ENCODE measurements at regions of chr2 and their contacts with region 1.

Region 1: GRCh38 chr2:96509114-96509846 is 4.1 kb upstream of the NEURL3 start:
- DNase-seq: peak in 3 of 5 donors; percentile 21 to 45 (median 26)
- H3K4me3 ChIP-seq: no peak overlapping the region
- H3K4me3 Mint-ChIP-seq: peak overlapping the region in 4 of 8 donors; percentile 7 to 46 (median 20)
- H3K27ac ChIP-seq: no peak overlapping the region
- H3K27ac Mint-ChIP-seq: peak overlapping the region in 2 of 7 donors; percentile 9 to 66
- H3K4me1 ChIP-seq: peaks cover 10% of the 10 kb centered on the region
- H3K4me1 Mint-ChIP-seq: peaks cover 4 to 23% (median 13%) of the 10 kb centered on the region in 4 donors
- H3K27me3 ChIP-seq: no peaks in the 10 kb centered on the region
- H3K27me3 Mint-ChIP-seq: peaks cover 1 to 12% of the 10 kb centered on the region in 2 donors

Region 2: DNA sequence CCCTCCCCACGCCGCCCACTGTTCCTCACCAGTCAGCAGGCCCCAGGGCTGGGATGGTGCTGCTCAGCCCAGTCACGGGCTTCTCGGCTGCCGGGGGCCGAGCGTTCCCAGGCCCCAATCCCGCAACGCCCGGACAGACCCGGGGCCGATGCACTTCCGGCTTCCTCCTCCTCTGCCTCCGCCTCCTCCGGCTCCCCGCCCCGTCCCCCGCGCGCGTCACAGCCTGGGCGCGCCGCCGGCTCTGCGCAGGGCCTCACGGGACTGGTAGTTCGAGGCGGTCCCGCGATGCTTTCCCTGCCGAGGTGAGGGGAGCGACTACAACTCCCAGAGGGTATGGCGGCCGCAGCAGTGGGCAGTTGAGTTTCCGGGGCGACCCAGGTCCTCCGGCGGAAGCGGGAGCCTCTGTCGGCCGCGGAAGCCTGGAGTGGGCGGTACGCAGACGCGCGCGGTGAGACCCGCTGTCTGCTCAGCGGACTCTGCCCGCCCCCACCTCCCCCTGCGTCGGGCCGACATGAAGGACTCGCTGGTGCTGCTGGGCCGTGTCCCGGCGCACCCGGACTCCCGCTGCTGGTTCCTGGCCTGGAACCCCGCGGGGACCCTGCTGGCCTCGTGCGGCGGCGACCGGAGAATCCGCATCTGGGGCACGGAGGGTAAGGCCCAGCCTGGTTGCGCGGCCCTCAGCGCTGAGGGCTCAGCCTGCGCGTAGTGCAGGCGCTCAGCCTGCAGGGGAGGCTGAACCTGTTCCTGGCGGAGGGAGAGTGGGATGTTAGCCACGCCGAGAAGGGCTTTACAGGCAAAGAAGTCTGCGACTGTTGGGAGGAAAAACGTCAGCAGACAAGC is 243.2 kb before region 1 on chr2 and contains the starts of genes CIAO1 and TMEM127:
- CTCF ChIA-PET with region 1: interaction called, 3 read pairs
- POLR2A ChIA-PET with region 1: interaction called, 3 read pairs
- intact Hi-C with region 1: loop called (anchors 10 kb)
- DNase-seq: peak; percentile 97 to 98 (median 97)
- H3K4me3 ChIP-seq: peak within 1 kb of the TSS; percentile 85 to 97
- H3K4me3 Mint-ChIP-seq: peak within 1 kb of the TSS; percentile 91 to 99 (median 94)
- H3K27ac ChIP-seq: peak within 1 kb of the TSS; percentile 94
- H3K27ac Mint-ChIP-seq: peak within 1 kb of the TSS; percentile 80 to 99 (median 94)
- H3K4me1 ChIP-seq: peaks cover 49% of the 10 kb centered on the region
- H3K4me1 Mint-ChIP-seq: peaks cover 22 to 64% (median 48%) of the 10 kb centered on the region in 4 donors
- H3K27me3 ChIP-seq: no peaks in the 10 kb centered on the region
- H3K27me3 Mint-ChIP-seq: no peaks in the 10 kb centered on the region
- total RNA-seq, gene CIAO1: 78.3 to 87.3 TPM
- total RNA-seq, gene TMEM127: 45.1 to 45.6 TPM

Region 3: DNA sequence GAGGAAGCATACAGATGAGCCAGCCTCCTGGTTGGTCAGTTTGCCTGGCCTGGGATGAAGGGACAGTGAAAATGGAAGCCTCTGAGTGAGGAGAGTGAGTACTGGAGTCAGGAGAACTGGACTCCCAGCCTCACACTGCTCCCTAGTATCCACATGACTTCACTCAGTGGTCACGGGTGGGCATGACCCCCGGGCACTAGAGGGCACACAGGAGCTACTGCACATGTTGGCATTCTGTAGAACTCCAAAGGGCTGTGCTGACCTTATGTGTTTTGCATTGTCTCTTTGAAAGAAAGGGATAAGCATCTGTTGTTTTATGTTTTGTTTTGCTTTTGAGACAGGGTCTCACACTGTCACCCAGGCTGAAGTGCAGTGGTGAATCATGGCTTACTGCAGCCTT is 150.0 kb before region 1 on chr2:
- CTCF ChIA-PET with region 1: interaction called, 13 read pairs
- POLR2A ChIA-PET with region 1: interaction called, 3 read pairs
- intact Hi-C with region 1: loop called (anchors 1 kb)
- DNase-seq: peak in 4 of 5 donors; percentile 22 to 41 (median 38)
- H3K4me3 ChIP-seq: no peak overlapping the region
- H3K4me3 Mint-ChIP-seq: no peak overlapping the region
- H3K27ac ChIP-seq: peak overlapping the region; percentile 2
- H3K27ac Mint-ChIP-seq: peak overlapping the region; percentile 69 to 97 (median 93)
- H3K4me1 ChIP-seq: peaks cover 21% of the 10 kb centered on the region
- H3K4me1 Mint-ChIP-seq: peaks cover 13 to 20% (median 14%) of the 10 kb centered on the region in 4 donors
- H3K27me3 ChIP-seq: no peaks in the 10 kb centered on the region
- H3K27me3 Mint-ChIP-seq: no peaks in the 10 kb centered on the region

Region 4: GRCh38 chr2:96470636-96471035 is 38.6 kb before region 1 on chr2:
- CTCF ChIA-PET with region 1: interaction called, 3 read pairs
- POLR2A ChIA-PET with region 1: no interaction called
- intact Hi-C with region 1: loop called (anchors 1 kb)
- DNase-seq: peak in 4 of 5 donors; percentile 9 to 32 (median 18)
- H3K4me3 ChIP-seq: no peak overlapping the region
- H3K4me3 Mint-ChIP-seq: peak overlapping the region in 3 of 8 donors; percentile 18 to 51 (median 42)
- H3K27ac ChIP-seq: no peak overlapping the region
- H3K27ac Mint-ChIP-seq: no peak overlapping the region
- H3K4me1 ChIP-seq: peaks cover 3% of the 10 kb centered on the region
- H3K4me1 Mint-ChIP-seq: peaks cover 0 to 4% (median 1%) of the 10 kb centered on the region in 4 donors
- H3K27me3 ChIP-seq: no peaks in the 10 kb centered on the region
- H3K27me3 Mint-ChIP-seq: peaks cover 5 to 7% of the 10 kb centered on the region in 2 donors

Region 5: GRCh38 chr2:96554293-96555145 is 45.2 kb after region 1 on chr2:
- CTCF ChIA-PET with region 1: interaction called, 11 read pairs
- POLR2A ChIA-PET with region 1: interaction called, 3 read pairs
- intact Hi-C with region 1: loop called (anchors 1 kb)
- DNase-seq: peak; percentile 46 to 80 (median 69)
- H3K4me3 ChIP-seq: no peak overlapping the region
- H3K4me3 Mint-ChIP-seq: peak overlapping the region in 7 of 8 donors; percentile 15 to 69 (median 32)
- H3K27ac ChIP-seq: no peak overlapping the region
- H3K27ac Mint-ChIP-seq: peak overlapping the region in 4 of 7 donors; percentile 22 to 86 (median 82)
- H3K4me1 ChIP-seq: peaks cover 17% of the 10 kb centered on the region
- H3K4me1 Mint-ChIP-seq: peaks cover 1 to 32% (median 12%) of the 10 kb centered on the region in 4 donors
- H3K27me3 ChIP-seq: no peaks in the 10 kb centered on the region
- H3K27me3 Mint-ChIP-seq: no peaks in the 10 kb centered on the region